Endothelial cell of umbilical vein (primary cell): ENCODE measurements at regions of chr20 and their contacts with region 1.

Region 1: DNA sequence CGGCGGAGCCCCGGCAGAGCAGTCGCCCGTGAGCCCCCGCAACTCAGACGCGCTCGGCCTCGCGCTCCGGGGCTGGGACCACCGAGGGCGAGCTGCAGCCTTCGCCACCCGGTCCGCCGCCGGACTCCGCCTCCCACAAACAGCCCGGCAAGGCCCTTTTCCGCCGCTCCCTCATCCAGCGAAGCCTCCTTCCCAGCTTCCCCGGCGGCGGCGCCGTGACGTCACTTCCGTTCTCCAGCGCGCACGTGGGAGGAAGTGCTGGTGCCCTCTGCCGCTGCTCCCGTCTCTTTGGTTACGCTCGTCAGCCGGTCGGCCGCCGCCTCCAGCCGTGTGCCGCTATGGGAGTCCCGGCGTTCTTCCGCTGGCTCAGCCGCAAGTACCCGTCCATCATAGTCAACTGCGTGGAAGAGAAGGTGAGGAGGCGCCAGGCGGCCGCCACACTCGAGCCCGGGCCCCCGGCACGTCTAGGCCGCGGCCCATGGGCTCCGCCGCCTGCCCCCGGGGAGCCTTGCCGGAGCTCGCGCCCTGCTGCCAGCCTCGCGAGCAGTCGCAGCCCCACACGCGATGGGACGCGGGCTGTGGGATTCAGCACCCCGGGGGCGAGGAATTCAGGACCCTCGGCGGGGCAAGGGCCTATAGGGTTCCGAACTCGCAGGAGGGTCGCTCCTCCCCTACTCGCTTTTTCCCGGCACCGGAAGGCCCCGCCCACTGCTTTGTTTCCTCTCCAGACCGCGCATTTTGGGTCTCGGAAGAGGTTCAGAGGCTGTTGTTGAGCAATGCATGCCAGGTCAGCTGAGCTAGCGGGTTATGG is at the start of gene XRN2:
- DNase-seq: peak; percentile 95
- H3K4me3 ChIP-seq: peak within 1 kb of the TSS; percentile 34 to 94 (median 89)
- H3K27ac ChIP-seq: peak within 1 kb of the TSS; percentile 92
- H3K4me1 ChIP-seq: peaks cover 15% of the 10 kb centered on the region
- H3K27me3 ChIP-seq: peaks cover 6 to 12% of the 10 kb centered on the region in 2 experiments
- CTCF ChIP-seq: no peak
- POLR2A ChIP-seq: peak; percentile 93
- total RNA-seq, gene XRN2: 62.5 and 66.6 TPM in 2 replicates

Region 2: GRCh38 chr20:21125849-21126580 is 177.3 kb before region 1 on chr20 and contains the start of gene KIZ:
- CTCF ChIA-PET with region 1: no interaction called
- POLR2A ChIA-PET with region 1: no interaction called
- dilution Hi-C with region 1: no loop called
- intact Hi-C with region 1: loop called (anchors 5 kb)
- DNase-seq: peak; percentile 97
- H3K4me3 ChIP-seq: peak within 1 kb of the TSS; percentile 57 to 97 (median 83)
- H3K27ac ChIP-seq: no peak within 1 kb of the TSS
- H3K4me1 ChIP-seq: peaks cover 13% of the 10 kb centered on the region
- H3K27me3 ChIP-seq: peaks cover 0 to 4% of the 10 kb centered on the region in 2 experiments
- CTCF ChIP-seq: peak in 1 of 2 donors; percentile 45
- POLR2A ChIP-seq: peak; percentile 62
- total RNA-seq, gene KIZ: 7.3 and 9.6 TPM in 2 replicates

Region 3: GRCh38 chr20:21323640-21324039 is 20.4 kb after region 1 on chr20:
- CTCF ChIA-PET with region 1: interaction called, 3 read pairs
- POLR2A ChIA-PET with region 1: no interaction called
- dilution Hi-C with region 1: no loop called
- intact Hi-C with region 1: loop called (anchors 1 kb)
- DNase-seq: peak; percentile 89
- H3K4me3 ChIP-seq: no peak overlapping the region
- H3K27ac ChIP-seq: peak overlapping the region; percentile 32
- H3K4me1 ChIP-seq: peaks cover 34% of the 10 kb centered on the region
- H3K27me3 ChIP-seq: no peaks in the 10 kb centered on the region
- CTCF ChIP-seq: no peak
- POLR2A ChIP-seq: no peak

Region 4: GRCh38 chr20:21395666-21396598 is 92.7 kb after region 1 on chr20:
- CTCF ChIA-PET with region 1: no interaction called
- POLR2A ChIA-PET with region 1: no interaction called
- dilution Hi-C with region 1: no loop called
- intact Hi-C with region 1: loop called (anchors 1 kb)
- DNase-seq: peak; percentile 32
- H3K4me3 ChIP-seq: no peak overlapping the region
- H3K27ac ChIP-seq: no peak overlapping the region
- H3K4me1 ChIP-seq: peaks cover 7% of the 10 kb centered on the region
- H3K27me3 ChIP-seq: peaks cover 70 to 100% of the 10 kb centered on the region in 2 experiments
- CTCF ChIP-seq: no peak
- POLR2A ChIP-seq: no peak

Region 5: GRCh38 chr20:21436205-21436604 is 132.9 kb after region 1 on chr20:
- CTCF ChIA-PET with region 1: no interaction called
- POLR2A ChIA-PET with region 1: no interaction called
- dilution Hi-C with region 1: no loop called
- intact Hi-C with region 1: loop called (anchors 2 kb)
- DNase-seq: peak; percentile 83
- H3K4me3 ChIP-seq: no peak overlapping the region
- H3K27ac ChIP-seq: peak overlapping the region; percentile 52
- H3K4me1 ChIP-seq: peaks cover 13% of the 10 kb centered on the region
- H3K27me3 ChIP-seq: no peaks in the 10 kb centered on the region
- CTCF ChIP-seq: no peak
- POLR2A ChIP-seq: no peak